ENCODE measurements at regions of chr19 and their contacts with region 1.

Region 1: DNA sequence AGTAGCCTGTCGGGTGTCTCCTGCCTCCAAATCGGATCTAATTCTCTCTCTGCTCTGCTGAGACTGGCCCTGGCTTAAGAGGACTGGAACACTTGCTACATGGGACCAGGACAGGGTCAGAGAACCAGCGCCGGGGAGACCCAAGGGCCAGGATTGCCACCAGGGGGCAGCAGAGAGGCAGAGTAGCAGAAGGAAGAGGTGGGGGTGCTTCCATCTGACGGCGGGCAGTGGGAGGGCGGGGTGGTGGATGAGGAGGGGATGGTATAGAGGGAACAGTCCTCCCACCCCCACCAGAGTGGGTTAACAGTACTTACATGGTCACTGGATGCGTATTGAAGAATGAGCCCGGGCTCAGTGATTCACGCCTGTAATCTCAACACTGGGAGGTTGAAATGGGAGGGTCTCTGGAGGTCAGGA is 11.9 kb downstream of the SELENOW start:
- DNase-seq: peak; percentile 72 to 93 (median 82)
- ATAC-seq: peak; percentile 71
- H3K4me3 ChIP-seq: no peak overlapping the region
- H3K4me3 Mint-ChIP-seq: no peak overlapping the region
- H3K27ac ChIP-seq: no peak overlapping the region
- H3K27ac Mint-ChIP-seq: no peak overlapping the region
- H3K4me1 ChIP-seq: peaks cover 8% of the 10 kb centered on the region
- H3K4me1 Mint-ChIP-seq: peaks cover 4% of the 10 kb centered on the region
- H3K27me3 ChIP-seq: no peaks in the 10 kb centered on the region
- H3K27me3 Mint-ChIP-seq: no peaks in the 10 kb centered on the region
- CTCF ChIP-seq: peak; percentile 94

Region 2: DNA sequence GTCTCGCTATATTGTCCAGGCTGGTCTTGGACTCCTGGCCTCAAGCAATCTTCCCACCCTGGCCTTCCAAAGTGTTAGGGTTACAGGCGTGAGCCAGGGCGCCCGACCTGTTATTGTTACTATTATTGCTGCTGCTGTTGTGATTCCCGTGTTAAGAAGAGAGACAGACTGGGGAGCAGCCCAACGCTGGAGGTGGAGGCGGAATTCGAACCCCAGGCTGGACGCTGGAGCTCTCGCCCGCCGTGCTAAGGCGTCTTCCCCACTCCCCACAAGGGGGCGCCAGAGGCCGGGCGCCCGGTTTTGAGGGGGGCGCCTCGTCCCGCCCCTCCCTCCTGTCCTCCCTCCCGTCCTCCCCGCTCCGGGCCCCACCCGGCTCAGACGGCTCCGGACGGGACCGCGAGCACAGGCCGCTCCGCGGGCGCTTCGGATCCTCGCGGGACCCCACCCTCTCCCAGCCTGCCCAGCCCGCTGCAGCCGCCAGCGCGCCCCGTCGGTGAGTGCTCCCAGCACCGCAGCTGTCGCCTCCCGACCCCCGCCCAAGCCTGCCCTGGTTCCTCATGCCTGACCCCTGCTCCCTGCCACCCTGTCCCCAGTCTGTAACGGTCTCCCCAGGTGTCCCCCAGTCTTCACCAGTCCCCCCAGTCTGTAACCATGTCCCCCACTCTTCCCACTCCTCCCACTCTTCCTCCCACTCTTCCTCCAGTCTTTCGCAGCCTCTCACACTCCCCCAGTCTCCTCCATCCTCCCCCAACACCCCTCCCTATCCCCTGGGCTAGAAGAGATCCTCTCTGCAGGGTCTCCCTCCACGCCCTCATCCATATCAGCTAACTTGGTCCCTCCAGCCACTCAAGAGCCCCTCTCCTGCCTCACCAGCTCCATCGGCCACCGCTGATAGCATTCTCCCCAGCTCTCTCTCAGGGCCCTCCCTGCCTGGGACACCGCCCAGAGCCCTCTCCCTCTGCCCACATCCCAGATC is 77.1 kb before region 1 on chr19 and contains the start of gene EHD2:
- CTCF ChIA-PET with region 1: interaction called, 4 read pairs
- POLR2A ChIA-PET with region 1: no interaction called
- intact Hi-C with region 1: loop called (anchors 1 to 2 kb)
- DNase-seq: peak in 10 of 14 experiments; percentile 9 to 62 (median 27)
- ATAC-seq: peak; percentile 34
- H3K4me3 ChIP-seq: no peak within 1 kb of the TSS
- H3K4me3 Mint-ChIP-seq: no peak within 1 kb of the TSS
- H3K27ac ChIP-seq: no peak within 1 kb of the TSS
- H3K27ac Mint-ChIP-seq: no peak within 1 kb of the TSS
- H3K4me1 ChIP-seq: peaks cover 5% of the 10 kb centered on the region
- H3K4me1 Mint-ChIP-seq: peaks cover 4% of the 10 kb centered on the region
- H3K27me3 ChIP-seq: peaks cover 22 to 24% of the 10 kb centered on the region in 2 experiments
- H3K27me3 Mint-ChIP-seq: peaks cover 49% of the 10 kb centered on the region
- CTCF ChIP-seq: peak; percentile 78
- total RNA-seq, gene EHD2: 0.16 TPM in 1 of 2 experiments, not detected in the other

Region 3: DNA sequence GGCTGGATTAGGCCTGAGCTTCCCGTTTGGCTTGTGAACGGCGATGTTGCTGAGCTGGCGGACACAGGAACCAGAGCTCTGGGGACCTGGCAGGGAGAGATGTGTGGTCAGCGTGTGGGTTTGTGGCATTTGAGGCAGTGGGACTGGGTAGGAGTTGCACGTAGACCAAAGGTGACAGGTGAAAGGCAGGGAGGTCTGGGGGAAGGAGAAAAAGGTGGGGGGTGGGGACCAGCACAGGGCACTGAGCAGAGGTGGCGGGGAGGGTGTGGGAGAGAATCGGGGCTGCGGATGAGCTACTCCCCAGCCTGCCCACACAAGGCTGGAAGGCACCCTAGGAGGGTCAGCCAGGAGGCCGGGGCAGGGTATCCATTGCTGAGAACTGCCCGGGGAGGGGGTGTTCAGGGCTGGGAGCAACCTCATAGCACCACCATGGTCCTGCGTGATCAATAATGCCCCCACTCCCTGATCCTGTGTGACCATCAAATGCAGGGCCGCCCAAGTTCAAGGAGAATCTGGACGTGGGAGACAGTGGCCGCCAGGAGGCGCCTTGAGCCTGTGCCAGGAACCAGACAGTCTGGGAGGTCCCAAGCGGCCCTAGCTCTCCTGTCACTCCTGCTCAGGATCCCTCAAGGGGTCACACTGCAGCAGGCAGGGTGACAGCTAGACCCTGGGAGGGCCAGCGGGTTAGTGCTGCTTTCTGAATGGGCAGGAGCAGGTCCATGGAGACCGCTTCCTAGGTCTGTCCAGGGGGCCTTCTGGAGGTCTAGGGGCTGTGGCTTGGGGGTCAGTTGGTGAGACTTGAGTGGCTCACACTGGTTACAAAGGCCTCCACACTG is 24.7 kb before region 1 on chr19:
- CTCF ChIA-PET with region 1: no interaction called
- POLR2A ChIA-PET with region 1: no interaction called
- intact Hi-C with region 1: loop called (anchors 1 kb)
- DNase-seq: peak in 11 of 14 experiments; percentile 17 to 66 (median 37)
- ATAC-seq: peak; percentile 50
- H3K4me3 ChIP-seq: no peak overlapping the region
- H3K4me3 Mint-ChIP-seq: no peak overlapping the region
- H3K27ac ChIP-seq: no peak overlapping the region
- H3K27ac Mint-ChIP-seq: no peak overlapping the region
- H3K4me1 ChIP-seq: no peaks in the 10 kb centered on the region
- H3K4me1 Mint-ChIP-seq: peaks cover 13% of the 10 kb centered on the region
- H3K27me3 ChIP-seq: no peaks in the 10 kb centered on the region
- H3K27me3 Mint-ChIP-seq: no peaks in the 10 kb centered on the region
- CTCF ChIP-seq: peak; percentile 52

Measured in CD4-positive, alpha-beta T cell (primary cell).